ENCODE measurements at regions of chr7 and their contacts with region 1.

Region 1: DNA sequence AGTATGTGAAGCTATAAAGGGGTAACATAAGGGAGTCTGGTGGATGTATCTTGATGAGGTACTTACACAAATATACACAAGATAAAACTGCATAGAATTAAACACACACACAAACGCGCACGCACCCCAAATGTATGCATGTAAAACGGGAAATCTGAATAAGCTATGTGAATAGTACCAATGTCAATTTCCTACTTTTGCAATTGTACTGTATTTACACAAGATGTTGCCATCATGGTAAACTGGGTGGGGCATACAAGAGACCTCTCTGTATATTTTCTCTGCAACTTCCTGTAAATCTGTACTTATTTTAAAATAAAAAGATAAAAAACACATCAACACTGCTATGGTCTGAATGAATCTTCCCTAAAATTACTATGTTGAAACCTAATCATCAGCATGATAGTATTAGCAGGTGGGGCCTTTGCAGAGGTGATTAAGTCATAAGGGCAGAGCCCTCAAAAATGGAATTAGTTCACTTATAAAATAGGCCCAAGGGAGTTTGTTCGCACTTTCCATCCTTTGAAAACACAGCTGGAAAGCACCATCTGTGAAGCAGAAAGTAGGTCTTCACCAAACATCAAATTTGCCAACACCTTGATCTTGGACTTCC is 30.1 kb downstream of the TPK1 start:
- DNase-seq: no peak
- ATAC-seq: no peak
- H3K4me3 ChIP-seq: no peak overlapping the region
- H3K4me3 Mint-ChIP-seq: no peak overlapping the region
- H3K27ac ChIP-seq: no peak overlapping the region
- H3K27ac Mint-ChIP-seq: no peak overlapping the region
- H3K4me1 ChIP-seq: no peaks in the 10 kb centered on the region
- H3K4me1 Mint-ChIP-seq: peaks cover 79% of the 10 kb centered on the region
- H3K27me3 ChIP-seq: no peaks in the 10 kb centered on the region
- H3K27me3 Mint-ChIP-seq: no peaks in the 10 kb centered on the region
- CTCF ChIP-seq: no peak

Region 2: DNA sequence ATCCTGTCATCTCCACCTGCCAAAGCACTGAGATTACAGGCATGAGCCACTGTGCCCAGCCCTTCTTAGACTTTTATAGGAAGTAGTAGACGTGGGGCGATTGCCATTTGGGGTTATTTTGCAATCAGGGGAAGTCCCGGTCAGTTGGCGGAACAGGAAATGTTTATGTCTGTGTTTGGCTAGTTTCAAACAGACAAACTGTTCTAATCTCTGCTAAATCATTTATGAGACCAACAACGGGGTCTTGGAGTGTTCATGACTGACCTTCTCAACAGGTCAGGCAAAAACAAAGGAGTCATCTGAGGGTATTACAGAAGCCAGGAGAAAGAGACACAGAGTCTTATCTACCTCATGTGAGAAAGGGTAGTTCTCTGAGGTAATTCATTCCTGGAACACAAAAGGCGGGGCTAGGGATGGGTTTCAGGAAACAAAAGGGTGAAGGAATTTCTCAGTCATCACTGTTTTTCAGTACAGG is 36.7 kb after region 1 on chr7:
- CTCF ChIA-PET with region 1: no interaction called
- POLR2A ChIA-PET with region 1: interaction called, 244 read pairs
- intact Hi-C with region 1: loop called in 1 of 2 experiments (anchors 5 kb)
- DNase-seq: peak in 3 of 14 experiments; percentile 34 to 68 (median 60)
- ATAC-seq: no peak
- H3K4me3 ChIP-seq: no peak overlapping the region
- H3K4me3 Mint-ChIP-seq: no peak overlapping the region
- H3K27ac ChIP-seq: peak overlapping the region in 1 of 2 donors; percentile 6
- H3K27ac Mint-ChIP-seq: no peak overlapping the region
- H3K4me1 ChIP-seq: peaks cover 7% of the 10 kb centered on the region
- H3K4me1 Mint-ChIP-seq: peaks cover 14% of the 10 kb centered on the region
- H3K27me3 ChIP-seq: no peaks in the 10 kb centered on the region
- H3K27me3 Mint-ChIP-seq: no peaks in the 10 kb centered on the region
- CTCF ChIP-seq: no peak

Region 3: GRCh38 chr7:144869082-144869481 is 63.3 kb after region 1 on chr7:
- CTCF ChIA-PET with region 1: no interaction called
- POLR2A ChIA-PET with region 1: no interaction called
- intact Hi-C with region 1: no loop called
- DNase-seq: no peak
- ATAC-seq: no peak
- H3K4me3 ChIP-seq: no peak overlapping the region
- H3K4me3 Mint-ChIP-seq: no peak overlapping the region
- H3K27ac ChIP-seq: no peak overlapping the region
- H3K27ac Mint-ChIP-seq: no peak overlapping the region
- H3K4me1 ChIP-seq: no peaks in the 10 kb centered on the region
- H3K4me1 Mint-ChIP-seq: no peaks in the 10 kb centered on the region
- H3K27me3 ChIP-seq: no peaks in the 10 kb centered on the region
- H3K27me3 Mint-ChIP-seq: peaks cover 21% of the 10 kb centered on the region
- CTCF ChIP-seq: no peak